Mammary epithelial cell (primary cell): ENCODE measurements at regions of chr7 and their contacts with region 1.

Region 1: DNA sequence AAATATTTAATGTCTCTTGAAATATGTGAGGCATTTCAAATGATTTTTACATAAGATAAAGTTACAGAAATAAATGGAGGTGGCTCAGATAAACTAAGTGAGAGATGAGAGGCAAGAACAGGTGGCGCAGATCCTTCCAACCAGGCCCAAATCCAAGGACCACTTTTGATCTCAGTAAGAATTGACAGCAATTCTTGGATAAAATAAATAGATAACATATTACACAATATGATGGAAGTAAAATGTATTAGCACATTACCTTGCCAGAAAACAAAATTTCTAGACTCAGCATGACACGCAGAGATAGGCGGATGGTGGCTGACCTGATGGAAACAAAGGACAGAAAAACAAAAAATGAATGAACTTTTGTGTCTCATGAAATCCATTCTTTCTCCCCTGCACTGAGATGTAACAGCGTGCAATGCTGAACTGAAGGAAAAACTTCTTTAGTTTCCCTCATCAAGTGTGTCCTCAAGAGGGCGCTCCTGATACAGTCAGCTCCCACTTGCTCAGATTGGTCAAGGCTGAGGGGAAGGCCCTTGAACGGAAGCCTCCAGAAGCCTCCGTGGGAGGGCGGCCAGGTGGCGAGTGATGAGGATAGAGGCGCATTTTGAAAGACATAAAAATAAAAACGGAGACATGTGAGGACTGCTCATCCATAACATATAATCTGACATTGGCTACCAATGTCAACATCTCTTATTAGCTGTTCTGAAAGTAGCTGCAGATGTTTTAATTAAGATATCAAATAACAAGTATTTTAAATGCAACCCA is 62.8 kb upstream of the GSDME start:
- DNase-seq: peak; percentile 82
- H3K4me3 ChIP-seq: no peak overlapping the region
- H3K27ac ChIP-seq: peak overlapping the region; percentile 98
- H3K4me1 ChIP-seq: peaks cover 36% of the 10 kb centered on the region
- H3K27me3 ChIP-seq: no peaks in the 10 kb centered on the region
- CTCF ChIP-seq: peak; percentile 94

Region 2: GRCh38 chr7:24492571-24492970 is 327.5 kb before region 1 on chr7:
- CTCF ChIA-PET with region 1: no interaction called
- dilution Hi-C with region 1: no loop called
- in situ Hi-C with region 1: no loop called
- intact Hi-C with region 1: no loop called
- DNase-seq: no peak
- H3K4me3 ChIP-seq: no peak overlapping the region
- H3K27ac ChIP-seq: no peak overlapping the region
- H3K4me1 ChIP-seq: no peaks in the 10 kb centered on the region
- H3K27me3 ChIP-seq: peaks cover 13% of the 10 kb centered on the region
- CTCF ChIP-seq: no peak

Region 3: GRCh38 chr7:24858108-24858977 is 38.2 kb after region 1 on chr7:
- CTCF ChIA-PET with region 1: no interaction called
- dilution Hi-C with region 1: no loop called
- in situ Hi-C with region 1: no loop called
- intact Hi-C with region 1: loop called (anchors 1 kb)
- DNase-seq: no peak
- H3K4me3 ChIP-seq: no peak overlapping the region
- H3K27ac ChIP-seq: no peak overlapping the region
- H3K4me1 ChIP-seq: peaks cover 5% of the 10 kb centered on the region
- H3K27me3 ChIP-seq: no peaks in the 10 kb centered on the region
- CTCF ChIP-seq: peak in 1 of 2 donors; percentile 21

Region 4: DNA sequence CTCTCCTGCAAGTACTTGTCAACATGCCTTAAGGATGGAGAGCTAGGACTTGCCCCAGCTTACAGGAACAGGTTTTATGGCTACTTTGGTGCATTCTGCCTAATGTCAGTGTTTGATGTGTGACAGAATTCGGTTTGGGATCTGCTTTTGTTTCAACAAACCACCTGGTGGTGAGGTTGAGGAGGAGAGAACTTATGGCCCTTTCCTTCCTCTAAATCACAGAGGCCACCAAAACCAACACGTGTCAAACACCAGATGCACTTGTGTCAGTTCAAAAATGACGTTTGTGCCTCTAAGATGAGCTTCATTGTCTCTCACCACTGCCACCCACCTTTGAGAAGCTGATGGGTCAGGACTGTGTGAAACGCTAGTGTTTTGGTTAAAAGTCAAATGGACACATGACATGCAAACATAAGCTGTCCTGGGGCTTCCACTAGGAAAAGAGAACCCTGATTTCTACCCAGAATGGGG is 76.0 kb after region 1 on chr7:
- CTCF ChIA-PET with region 1: no interaction called
- dilution Hi-C with region 1: no loop called
- in situ Hi-C with region 1: no loop called
- intact Hi-C with region 1: loop called (anchors 5 kb)
- DNase-seq: no peak
- H3K4me3 ChIP-seq: no peak overlapping the region
- H3K27ac ChIP-seq: no peak overlapping the region
- H3K4me1 ChIP-seq: peaks cover 20% of the 10 kb centered on the region
- H3K27me3 ChIP-seq: no peaks in the 10 kb centered on the region
- CTCF ChIP-seq: no peak

Region 5: GRCh38 chr7:24979863-24980533 is 159.9 kb after region 1 on chr7 and contains the start of gene OSBPL3:
- CTCF ChIA-PET with region 1: interaction called, 9 read pairs
- dilution Hi-C with region 1: no loop called
- in situ Hi-C with region 1: loop called in 1 of 2 experiments (anchors 10 kb)
- intact Hi-C with region 1: loop called (anchors 1 kb)
- DNase-seq: peak; percentile 94
- H3K4me3 ChIP-seq: peak within 1 kb of the TSS; percentile 80 to 85 (median 81)
- H3K27ac ChIP-seq: peak within 1 kb of the TSS; percentile 85
- H3K4me1 ChIP-seq: peaks cover 45% of the 10 kb centered on the region
- H3K27me3 ChIP-seq: no peaks in the 10 kb centered on the region
- CTCF ChIP-seq: no peak
- total RNA-seq, gene OSBPL3: 42.7 to 64.8 TPM

Region 6: GRCh38 chr7:25069900-25070443 is 249.9 kb after region 1 on chr7:
- CTCF ChIA-PET with region 1: no interaction called
- dilution Hi-C with region 1: no loop called
- in situ Hi-C with region 1: loop called in 1 of 2 experiments (anchors 10 kb)
- intact Hi-C with region 1: loop called (anchors 1 kb)
- DNase-seq: peak; percentile 45
- H3K4me3 ChIP-seq: no peak overlapping the region
- H3K27ac ChIP-seq: no peak overlapping the region
- H3K4me1 ChIP-seq: no peaks in the 10 kb centered on the region
- H3K27me3 ChIP-seq: no peaks in the 10 kb centered on the region
- CTCF ChIP-seq: peak; percentile 77 to 84

Region 7: GRCh38 chr7:26533217-26533616 is 1713.1 kb after region 1 on chr7:
- CTCF ChIA-PET with region 1: interaction called, 10 read pairs
- dilution Hi-C with region 1: no loop called
- in situ Hi-C with region 1: no loop called
- intact Hi-C with region 1: no loop called
- DNase-seq: no peak
- H3K4me3 ChIP-seq: no peak overlapping the region
- H3K27ac ChIP-seq: no peak overlapping the region
- H3K4me1 ChIP-seq: no peaks in the 10 kb centered on the region
- H3K27me3 ChIP-seq: no peaks in the 10 kb centered on the region
- CTCF ChIP-seq: no peak